Sciatic nerve (tissue), 2 donors: ENCODE measurements at regions of chr6 and their contacts with region 1.

Region 1: GRCh38 chr6:83183082-83183828 is 9.8 kb downstream of the PGM3 start:
- DNase-seq: no peak
- ATAC-seq: no peak

Region 2: DNA sequence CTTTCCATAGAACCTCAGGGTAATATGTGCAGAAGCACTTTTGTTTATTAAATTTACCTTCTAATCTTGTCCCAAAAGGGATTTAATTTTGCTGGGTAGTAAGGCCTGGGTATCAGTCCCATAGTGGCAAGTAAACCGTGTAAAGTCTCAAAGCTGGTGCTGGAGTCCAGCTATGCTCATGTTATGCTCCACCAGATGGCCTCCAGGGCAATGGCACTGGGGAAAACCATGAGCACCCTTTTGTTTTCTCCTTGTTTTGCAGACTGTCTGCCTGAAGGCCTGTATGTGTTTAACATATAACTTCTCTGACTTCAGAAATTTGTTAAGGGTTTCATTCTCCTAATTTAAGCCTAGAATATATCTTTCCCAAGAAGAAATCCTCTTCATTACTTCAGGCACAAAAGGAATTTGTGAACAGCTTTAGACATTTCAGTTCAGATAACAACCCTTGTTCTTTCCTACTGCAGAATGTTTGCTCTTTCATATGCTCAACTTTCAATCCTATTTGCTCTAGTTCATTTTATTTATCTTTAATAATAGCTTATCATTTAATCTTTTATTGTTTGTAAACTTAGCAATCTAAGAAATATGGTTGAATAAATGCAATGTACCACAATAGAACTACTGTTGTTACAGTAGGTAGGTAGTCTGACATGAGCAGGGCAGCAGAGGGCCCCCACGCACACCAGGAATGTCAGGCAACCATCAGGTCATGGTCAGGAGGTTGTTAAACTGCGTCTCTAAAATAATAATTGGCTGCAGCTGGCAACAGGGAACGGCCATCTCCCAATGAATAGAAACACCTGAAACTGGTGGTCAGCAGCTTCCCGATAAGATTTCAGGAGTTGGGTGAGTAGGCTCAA is 1593.6 kb before region 1 on chr6:
- intact Hi-C with region 1: no loop called
- DNase-seq: no peak
- ATAC-seq: no peak

Region 3: DNA sequence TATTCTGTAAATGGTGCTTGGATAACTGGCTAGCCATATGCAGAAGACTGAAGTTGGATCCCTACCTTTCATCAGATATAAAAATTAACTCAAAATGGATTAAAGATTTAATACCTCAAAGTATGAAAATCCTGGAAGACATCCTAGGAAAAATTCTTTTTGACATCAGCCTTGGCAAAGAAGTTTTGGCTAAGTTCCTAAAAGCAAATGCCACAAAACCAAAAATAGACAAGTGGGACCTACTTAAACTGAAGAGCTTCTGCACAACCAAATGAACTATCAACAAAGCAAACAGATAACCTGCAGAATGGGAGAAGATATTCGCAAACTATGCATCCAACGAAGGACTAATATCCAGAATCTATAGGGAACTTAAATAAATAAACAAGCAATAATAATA is 609.6 kb after region 1 on chr6:
- intact Hi-C with region 1: loop called (anchors 5 kb)
- DNase-seq: no peak
- ATAC-seq: no peak